ENCODE measurements at regions of chr2 and their contacts with region 1.

Region 1: DNA sequence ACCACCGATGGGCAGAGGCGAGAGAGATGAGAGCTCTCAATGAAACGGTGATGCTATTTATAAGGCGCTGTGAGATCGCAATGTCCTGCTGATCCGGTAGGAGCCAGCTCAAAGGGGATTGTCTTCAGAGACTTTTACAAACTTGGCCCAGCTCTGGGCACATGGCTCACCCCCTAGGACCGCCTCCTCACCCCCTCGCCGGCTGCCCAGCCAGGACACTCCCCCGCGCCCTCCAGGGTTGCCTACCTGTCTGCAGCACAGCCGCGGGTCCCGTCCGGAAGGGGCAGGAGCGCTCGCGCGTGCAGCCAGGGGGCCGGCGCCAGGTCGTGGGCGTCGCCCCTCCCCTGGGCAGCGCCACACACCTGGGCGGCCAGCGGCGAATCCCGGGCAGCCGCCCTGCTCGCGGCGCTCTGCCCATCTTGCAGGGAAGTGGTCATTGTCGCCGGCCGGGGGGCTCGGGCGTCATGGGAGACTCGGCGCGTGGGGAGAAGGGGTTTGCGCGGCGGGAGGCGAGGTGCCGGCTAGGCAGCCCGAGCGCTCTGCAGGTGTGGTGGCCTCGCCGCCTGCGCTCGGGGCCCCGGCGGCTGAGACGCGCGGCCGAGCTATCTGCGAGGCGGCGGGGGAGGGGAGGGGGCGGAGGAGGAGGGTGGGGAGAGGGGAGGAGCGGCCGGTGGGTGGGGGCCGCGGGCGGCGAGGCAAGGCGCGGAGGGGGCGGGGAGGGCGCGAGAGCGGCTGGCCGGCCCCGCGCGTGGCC is at the start of gene GRB14:
- DNase-seq: peak; percentile 66
- ATAC-seq: peak; percentile 95
- total RNA-seq, gene GRB14: 22.1 TPM

Region 2: GRCh38 chr2:164514231-164514907 is 106.7 kb before region 1 on chr2:
- intact Hi-C with region 1: no loop called
- DNase-seq: no peak
- ATAC-seq: no peak

Region 3: DNA sequence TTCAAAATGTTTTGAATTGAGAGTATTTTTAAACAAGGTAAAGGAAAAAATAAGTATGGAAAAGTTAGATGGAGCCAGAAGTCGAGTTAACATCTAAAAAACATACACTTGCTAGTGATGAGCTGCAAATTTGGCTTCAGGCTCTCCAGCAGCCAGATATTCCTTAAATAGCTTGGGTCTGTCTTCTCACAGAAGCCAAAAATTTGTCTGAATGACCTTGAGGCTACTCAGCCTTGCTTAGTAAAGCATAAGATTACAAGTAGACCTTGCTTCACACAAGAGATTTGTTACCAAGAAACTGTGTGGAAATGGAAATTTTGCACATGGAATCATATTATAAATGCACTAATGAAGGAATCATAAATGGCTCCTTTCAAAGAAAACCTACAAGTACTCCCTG is 41.0 kb after region 1 on chr2:
- intact Hi-C with region 1: loop called (anchors 2 kb)
- DNase-seq: no peak
- ATAC-seq: peak; percentile 59

Region 4: DNA sequence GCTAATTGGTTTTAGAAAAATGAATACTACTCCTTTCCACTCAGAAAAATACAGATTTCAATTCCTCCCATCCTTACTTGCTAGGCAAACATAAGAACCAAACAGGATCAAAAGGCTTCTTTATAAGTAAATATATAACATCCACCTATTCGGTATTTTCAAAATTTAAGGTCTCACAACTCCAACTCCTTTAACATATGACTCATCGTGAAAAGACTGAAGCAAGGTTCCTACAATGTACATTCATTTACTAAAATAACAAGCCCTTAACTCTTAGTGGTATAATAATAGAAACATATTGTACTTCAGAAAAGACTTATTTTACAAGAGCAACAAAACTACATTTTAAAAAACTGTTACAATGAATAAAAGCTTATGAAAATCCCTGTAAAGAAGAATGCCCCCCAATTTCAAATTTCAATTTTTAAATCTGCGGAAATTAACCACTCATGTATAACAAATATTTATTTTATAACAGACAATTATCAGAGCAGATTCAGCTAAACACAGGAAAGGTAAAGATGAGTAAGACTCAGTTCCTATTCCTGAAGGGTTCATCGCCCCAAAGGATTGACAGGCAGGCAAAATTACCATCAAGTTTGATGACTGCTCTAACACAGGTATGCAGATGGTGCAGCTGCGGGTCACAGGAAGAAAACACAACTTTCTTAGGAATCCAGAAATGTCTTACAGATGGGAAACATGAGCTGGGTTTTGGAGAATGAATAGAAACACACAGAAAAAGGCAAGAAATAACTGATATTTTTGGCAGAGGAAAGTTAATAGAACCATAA is 124.2 kb after region 1 on chr2:
- intact Hi-C with region 1: no loop called
- DNase-seq: no peak
- ATAC-seq: no peak

Region 5: DNA sequence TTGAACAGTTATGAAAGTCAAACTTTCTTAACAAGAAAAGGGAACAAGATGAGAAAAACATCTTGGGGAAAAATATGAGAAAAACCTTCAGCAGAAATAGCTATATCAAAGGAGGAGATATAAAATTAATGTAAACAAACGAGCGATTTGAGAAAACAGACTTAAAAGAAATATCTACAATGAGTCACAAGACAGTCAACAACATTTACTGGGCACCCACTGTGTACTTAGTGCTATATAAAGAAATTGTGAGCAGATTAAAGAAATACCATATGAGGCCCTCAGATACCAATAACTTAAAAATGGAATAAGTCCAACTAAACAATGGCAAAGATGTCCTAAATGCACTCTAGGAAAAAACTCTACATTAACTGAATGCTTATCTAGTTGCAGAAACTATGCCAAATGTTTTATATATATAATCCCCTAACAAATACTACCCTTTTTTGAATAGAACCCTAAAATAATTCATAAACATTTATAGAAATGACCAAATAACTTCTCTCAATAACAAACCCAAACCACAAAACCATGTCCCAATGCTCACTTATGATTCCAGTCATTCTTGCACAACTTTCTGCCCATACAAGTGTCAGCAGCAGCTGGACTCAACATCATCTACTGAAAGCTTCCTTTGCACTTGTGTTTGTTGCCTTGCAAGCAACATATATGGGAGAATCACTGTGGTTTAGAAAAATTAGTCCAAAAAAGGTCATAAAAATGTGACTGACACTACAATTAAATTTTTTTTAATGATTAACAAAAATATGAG is 137.1 kb after region 1 on chr2:
- intact Hi-C with region 1: no loop called
- DNase-seq: no peak
- ATAC-seq: no peak